ENCODE measurements at regions of chr4 and their contacts with region 1.

Region 1: DNA sequence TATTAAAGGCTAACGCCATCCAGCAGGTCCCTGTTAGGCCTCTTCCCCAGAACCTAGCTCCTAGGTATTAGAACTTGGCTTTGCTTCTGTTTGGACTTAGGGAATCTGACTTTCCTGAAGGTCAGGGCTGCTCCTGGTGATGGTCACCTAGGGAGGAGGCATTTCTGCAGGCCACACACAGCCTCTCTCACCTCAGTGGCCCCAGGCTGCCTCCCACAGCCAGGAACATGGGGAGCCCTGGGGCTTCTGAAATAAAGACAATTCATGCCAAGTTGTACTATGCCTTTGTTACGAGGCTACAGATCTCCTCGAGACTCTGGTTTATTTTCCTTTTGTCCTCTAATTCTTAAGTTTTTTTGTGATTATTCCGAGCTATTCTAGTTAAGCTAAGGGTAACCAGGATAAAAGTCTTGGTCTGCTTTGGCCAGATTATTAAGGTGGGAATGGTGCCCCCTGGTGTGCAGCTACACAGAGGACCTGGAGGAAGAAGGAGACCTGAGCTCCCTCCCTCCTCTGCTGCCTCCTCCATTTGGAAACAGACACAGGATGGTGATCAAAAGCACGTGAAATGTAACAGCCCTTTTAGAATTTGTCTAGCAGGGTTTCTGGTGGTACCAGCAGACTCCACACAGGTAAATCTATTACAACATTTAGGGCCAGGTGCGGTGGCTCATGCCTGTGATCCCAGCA is 131.0 kb downstream of the DCLK2 start:
- DNase-seq: peak; percentile 73
- H3K4me3 ChIP-seq: no peak overlapping the region
- H3K27ac ChIP-seq: no peak overlapping the region
- H3K4me1 ChIP-seq: no peaks in the 10 kb centered on the region
- H3K27me3 ChIP-seq: no peaks in the 10 kb centered on the region
- CTCF ChIP-seq: peak; percentile 59 to 69
- POLR2A ChIP-seq: no peak

Region 2: GRCh38 chr4:150010525-150011126 is 198.7 kb before region 1 on chr4:
- CTCF ChIA-PET with region 1: interaction called, 299 read pairs
- POLR2A ChIA-PET with region 1: no interaction called
- dilution Hi-C with region 1: no loop called
- intact Hi-C with region 1: loop called (anchors 1 kb)
- DNase-seq: peak; percentile 69
- H3K4me3 ChIP-seq: no peak overlapping the region
- H3K27ac ChIP-seq: no peak overlapping the region
- H3K4me1 ChIP-seq: no peaks in the 10 kb centered on the region
- H3K27me3 ChIP-seq: no peaks in the 10 kb centered on the region
- CTCF ChIP-seq: peak; percentile 42 to 49
- POLR2A ChIP-seq: no peak

Region 3: GRCh38 chr4:150063128-150063527 is 146.2 kb before region 1 on chr4:
- CTCF ChIA-PET with region 1: interaction called, 15 read pairs
- POLR2A ChIA-PET with region 1: no interaction called
- dilution Hi-C with region 1: no loop called
- intact Hi-C with region 1: no loop called
- DNase-seq: no peak
- H3K4me3 ChIP-seq: no peak overlapping the region
- H3K27ac ChIP-seq: no peak overlapping the region
- H3K4me1 ChIP-seq: no peaks in the 10 kb centered on the region
- H3K27me3 ChIP-seq: no peaks in the 10 kb centered on the region
- CTCF ChIP-seq: no peak
- POLR2A ChIP-seq: no peak

Region 4: GRCh38 chr4:150098214-150098613 is 111.1 kb before region 1 on chr4:
- CTCF ChIA-PET with region 1: interaction called, 10 read pairs
- POLR2A ChIA-PET with region 1: no interaction called
- dilution Hi-C with region 1: no loop called
- intact Hi-C with region 1: no loop called
- DNase-seq: peak; percentile 14
- H3K4me3 ChIP-seq: no peak overlapping the region
- H3K27ac ChIP-seq: no peak overlapping the region
- H3K4me1 ChIP-seq: no peaks in the 10 kb centered on the region
- H3K27me3 ChIP-seq: no peaks in the 10 kb centered on the region
- CTCF ChIP-seq: no peak
- POLR2A ChIP-seq: no peak

Region 5: GRCh38 chr4:150119492-150119891 is 89.8 kb before region 1 on chr4:
- CTCF ChIA-PET with region 1: interaction called, 12 read pairs
- POLR2A ChIA-PET with region 1: no interaction called
- dilution Hi-C with region 1: no loop called
- intact Hi-C with region 1: no loop called
- DNase-seq: peak; percentile 54
- H3K4me3 ChIP-seq: no peak overlapping the region
- H3K27ac ChIP-seq: peak overlapping the region; percentile 53
- H3K4me1 ChIP-seq: peaks cover 13% of the 10 kb centered on the region
- H3K27me3 ChIP-seq: no peaks in the 10 kb centered on the region
- CTCF ChIP-seq: no peak
- POLR2A ChIP-seq: no peak

Region 6: GRCh38 chr4:150224896-150225591 is 15.8 kb after region 1 on chr4:
- CTCF ChIA-PET with region 1: interaction called, 17 read pairs
- POLR2A ChIA-PET with region 1: no interaction called
- dilution Hi-C with region 1: no loop called
- intact Hi-C with region 1: no loop called
- DNase-seq: no peak
- H3K4me3 ChIP-seq: no peak overlapping the region
- H3K27ac ChIP-seq: no peak overlapping the region
- H3K4me1 ChIP-seq: peaks cover 12% of the 10 kb centered on the region
- H3K27me3 ChIP-seq: no peaks in the 10 kb centered on the region
- CTCF ChIP-seq: no peak
- POLR2A ChIP-seq: no peak

Region 7: DNA sequence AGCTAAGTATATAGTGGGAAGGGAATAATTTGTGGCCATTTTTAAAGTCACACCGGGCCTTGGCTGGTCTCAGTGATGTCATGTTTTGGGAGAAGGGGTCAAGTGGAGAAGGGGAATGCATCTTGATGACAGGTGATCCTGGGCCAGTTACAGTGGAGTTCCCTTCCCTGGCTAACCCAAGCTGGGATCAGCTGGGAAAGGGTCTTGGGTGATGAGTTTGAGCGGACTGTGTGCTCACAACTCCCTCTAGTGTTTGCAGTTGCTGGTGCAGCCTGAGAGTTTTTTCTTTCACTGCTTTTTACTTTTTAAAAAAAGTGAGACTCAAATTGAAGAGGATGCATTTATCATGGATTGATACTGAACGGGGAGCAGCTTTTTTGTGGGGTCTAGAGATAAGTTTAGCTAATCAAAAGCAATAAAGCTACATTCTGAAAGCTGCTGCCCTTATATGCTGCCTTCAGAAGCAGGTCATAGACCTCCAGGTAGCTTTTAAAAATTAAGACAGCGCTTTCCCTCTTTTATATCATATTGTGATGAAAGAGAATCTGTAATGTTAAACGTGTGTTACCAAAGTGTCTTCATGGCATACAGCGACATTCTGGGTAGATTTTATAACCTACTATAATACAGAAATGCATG is 33.7 kb after region 1 on chr4:
- CTCF ChIA-PET with region 1: interaction called, 100 read pairs
- POLR2A ChIA-PET with region 1: no interaction called
- dilution Hi-C with region 1: no loop called
- intact Hi-C with region 1: loop called (anchors 2 kb)
- DNase-seq: peak; percentile 67
- H3K4me3 ChIP-seq: no peak overlapping the region
- H3K27ac ChIP-seq: no peak overlapping the region
- H3K4me1 ChIP-seq: peaks cover 8% of the 10 kb centered on the region
- H3K27me3 ChIP-seq: no peaks in the 10 kb centered on the region
- CTCF ChIP-seq: peak; percentile 87 to 89
- POLR2A ChIP-seq: no peak

Measured in endothelial cell of umbilical vein (primary cell).